ENCODE measurements at regions of chr13 and their contacts with region 1.

Region 1: GRCh38 chr13:101514788-101515187 is 62.3 kb downstream of the ITGBL1 start:
- DNase-seq: no peak
- H3K4me3 Mint-ChIP-seq: no peak overlapping the region
- H3K27ac Mint-ChIP-seq: no peak overlapping the region
- H3K4me1 Mint-ChIP-seq: peaks cover 2% of the 10 kb centered on the region
- H3K27me3 Mint-ChIP-seq: peaks cover 4% of the 10 kb centered on the region

Region 2: DNA sequence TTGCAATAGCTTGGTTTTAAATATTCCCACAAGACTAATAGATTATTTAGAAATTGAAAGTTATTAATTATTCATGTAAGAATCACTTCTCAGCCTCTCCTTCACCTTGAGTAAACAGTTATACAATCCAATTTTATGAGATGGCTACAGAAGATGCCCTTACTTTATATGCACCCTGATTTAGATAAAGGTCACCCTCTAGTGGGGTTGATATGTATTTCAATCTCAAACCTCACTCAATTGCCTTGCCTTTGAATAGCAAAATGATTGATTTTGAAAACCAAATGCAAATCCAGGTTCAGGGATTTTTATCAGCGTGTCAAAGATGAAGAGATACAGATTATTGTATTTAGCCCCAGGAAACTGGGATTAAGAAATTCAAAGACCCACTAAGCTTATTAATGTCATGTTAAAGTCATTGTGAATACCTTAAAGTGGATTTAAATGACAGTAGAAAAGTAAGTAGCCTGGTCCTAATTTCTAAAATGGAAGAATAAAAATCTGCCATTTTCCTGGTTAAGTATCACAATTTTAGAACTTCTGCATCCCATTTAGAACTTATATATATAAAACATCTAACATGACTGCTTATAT is 242.8 kb after region 1 on chr13:
- intact Hi-C with region 1: loop called (anchors 1 kb)
- DNase-seq: no peak
- H3K4me3 Mint-ChIP-seq: no peak overlapping the region
- H3K27ac Mint-ChIP-seq: no peak overlapping the region
- H3K4me1 Mint-ChIP-seq: no peaks in the 10 kb centered on the region
- H3K27me3 Mint-ChIP-seq: no peaks in the 10 kb centered on the region

Region 3: GRCh38 chr13:102452831-102453230 is 938.0 kb after region 1 on chr13:
- intact Hi-C with region 1: loop called (anchors 10 kb)
- DNase-seq: no peak
- H3K4me3 Mint-ChIP-seq: no peak overlapping the region
- H3K27ac Mint-ChIP-seq: no peak overlapping the region
- H3K4me1 Mint-ChIP-seq: peaks cover 5% of the 10 kb centered on the region
- H3K27me3 Mint-ChIP-seq: peaks cover 9% of the 10 kb centered on the region

Region 4: GRCh38 chr13:102555917-102556553 is 1041.2 kb after region 1 on chr13:
- intact Hi-C with region 1: loop called (anchors 10 kb)
- DNase-seq: no peak
- H3K4me3 Mint-ChIP-seq: no peak overlapping the region
- H3K27ac Mint-ChIP-seq: no peak overlapping the region
- H3K4me1 Mint-ChIP-seq: no peaks in the 10 kb centered on the region
- H3K27me3 Mint-ChIP-seq: peaks cover 9% of the 10 kb centered on the region

Measured in activated T-helper 1 cell treated with anti-CD3 and anti-CD28 coated beads, Interleukin-12 subunit alpha, Interleukin-12 subunit beta, Interleukin-2, Interleukin-4 antibody, amounts not matched to agents 30 ng/mL and 10 ng/mL and 1 ng/mL, durations not matched to agents 14 hours and 24 hours and 36 hours (primary cell).